ENCODE measurements at regions of chr11 and their contacts with region 1.

Region 1: DNA sequence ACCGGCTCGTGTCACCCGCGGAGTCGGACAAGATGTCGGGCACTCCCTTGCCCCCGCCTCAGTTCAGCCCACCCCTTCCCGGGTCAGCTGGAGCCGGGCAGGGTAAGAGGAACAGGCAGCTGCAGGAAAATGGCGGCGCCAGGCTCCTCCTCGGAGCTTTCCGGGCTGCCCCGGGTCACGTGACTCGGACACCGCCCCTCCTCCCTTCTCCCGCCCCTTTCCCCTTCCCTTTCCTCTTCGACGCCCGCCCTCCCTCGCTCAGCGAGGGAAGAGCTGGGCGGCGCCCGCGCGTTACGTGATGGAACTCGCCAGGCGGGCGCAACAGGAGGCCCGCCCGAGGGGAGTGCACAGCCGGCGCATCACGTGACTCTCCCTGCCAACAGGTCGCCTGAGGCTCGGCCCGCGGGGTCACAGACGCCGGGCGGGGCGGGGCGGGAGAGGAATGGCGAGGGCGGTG is at the start of gene PICALM:
- DNase-seq: peak; percentile 98 to 99 (median 99)
- ATAC-seq: peak; percentile 94 to 97 (median 96)
- H3K4me3 ChIP-seq: peak within 1 kb of the TSS; percentile 72 to 99 (median 91)
- H3K27ac ChIP-seq: peak within 1 kb of the TSS; percentile 96 to 99 (median 98)
- H3K4me1 ChIP-seq: peaks cover 0 to 39% (median 31%) of the 10 kb centered on the region in 12 donors
- H3K27me3 ChIP-seq: no peaks in the 10 kb centered on the region
- CTCF ChIP-seq: peak in 2 of 12 donors; percentile 3 to 18
- POLR2A ChIP-seq: peak in 1 of 2 donors; percentile 71
- total RNA-seq, gene PICALM: 139 to 207 (median 183) TPM

Region 2: GRCh38 chr11:86003654-86004053 is 65.3 kb before region 1 on chr11:
- intact Hi-C with region 1: no loop called
- DNase-seq: no peak
- ATAC-seq: no peak
- H3K4me3 ChIP-seq: no peak overlapping the region
- H3K27ac ChIP-seq: no peak overlapping the region
- H3K4me1 ChIP-seq: peaks cover 0 to 8% (median 0%) of the 10 kb centered on the region in 12 donors
- H3K27me3 ChIP-seq: no peaks in the 10 kb centered on the region
- CTCF ChIP-seq: no peak
- POLR2A ChIP-seq: no peak

Region 3: DNA sequence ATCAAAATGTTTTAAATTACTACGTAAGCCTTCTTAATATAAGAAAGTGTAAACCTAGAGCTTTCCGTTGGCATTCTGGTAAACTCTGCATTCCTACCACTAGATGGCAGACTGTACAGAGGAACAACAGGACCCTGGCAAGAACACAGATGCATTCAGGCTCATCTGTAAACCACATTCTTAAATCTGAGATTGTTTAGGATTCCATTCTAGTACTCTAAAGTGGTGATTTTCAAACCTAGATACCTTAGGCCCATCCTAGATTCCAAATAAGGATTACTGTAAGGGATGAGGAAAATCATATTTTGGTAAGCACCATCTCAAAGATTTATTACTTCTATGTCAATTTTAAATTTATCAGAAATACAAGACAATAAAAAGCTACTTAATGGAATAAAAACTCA is 27.0 kb before region 1 on chr11:
- intact Hi-C with region 1: loop called in 2 of 10 experiments (anchors 2 kb)
- DNase-seq: peak in 3 of 5 donors; percentile 32 to 79 (median 78)
- ATAC-seq: peak; percentile 80 to 91 (median 84)
- H3K4me3 ChIP-seq: peak overlapping the region in 8 of 12 donors; percentile 16 to 46 (median 26)
- H3K27ac ChIP-seq: peak overlapping the region in 10 of 12 donors; percentile 13 to 75 (median 58)
- H3K4me1 ChIP-seq: peaks cover 0 to 81% (median 57%) of the 10 kb centered on the region in 12 donors
- H3K27me3 ChIP-seq: no peaks in the 10 kb centered on the region
- CTCF ChIP-seq: peak; percentile 82 to 94 (median 89)
- POLR2A ChIP-seq: no peak

Region 4: GRCh38 chr11:86151174-86152005 is 82.4 kb after region 1 on chr11:
- intact Hi-C with region 1: loop called in 1 of 10 experiments (anchors 5 kb)
- DNase-seq: peak; percentile 38 to 72 (median 39)
- ATAC-seq: peak; percentile 47 to 73 (median 67)
- H3K4me3 ChIP-seq: no peak overlapping the region
- H3K27ac ChIP-seq: peak overlapping the region in 11 of 12 donors; percentile 0 to 70 (median 44)
- H3K4me1 ChIP-seq: peaks cover 0 to 37% (median 23%) of the 10 kb centered on the region in 12 donors
- H3K27me3 ChIP-seq: no peaks in the 10 kb centered on the region
- CTCF ChIP-seq: no peak
- POLR2A ChIP-seq: no peak

Region 5: GRCh38 chr11:86174101-86175046 is 105.4 kb after region 1 on chr11:
- intact Hi-C with region 1: loop called in 8 of 10 experiments (anchors 1 to 5 kb)
- DNase-seq: peak; percentile 81 to 95 (median 86)
- ATAC-seq: peak; percentile 91 to 96 (median 95)
- H3K4me3 ChIP-seq: no peak overlapping the region
- H3K27ac ChIP-seq: peak overlapping the region; percentile 23 to 89 (median 76)
- H3K4me1 ChIP-seq: peaks cover 6 to 78% (median 45%) of the 10 kb centered on the region in 12 donors
- H3K27me3 ChIP-seq: no peaks in the 10 kb centered on the region
- CTCF ChIP-seq: no peak
- POLR2A ChIP-seq: peak in 1 of 2 donors; percentile 31

Region 6: DNA sequence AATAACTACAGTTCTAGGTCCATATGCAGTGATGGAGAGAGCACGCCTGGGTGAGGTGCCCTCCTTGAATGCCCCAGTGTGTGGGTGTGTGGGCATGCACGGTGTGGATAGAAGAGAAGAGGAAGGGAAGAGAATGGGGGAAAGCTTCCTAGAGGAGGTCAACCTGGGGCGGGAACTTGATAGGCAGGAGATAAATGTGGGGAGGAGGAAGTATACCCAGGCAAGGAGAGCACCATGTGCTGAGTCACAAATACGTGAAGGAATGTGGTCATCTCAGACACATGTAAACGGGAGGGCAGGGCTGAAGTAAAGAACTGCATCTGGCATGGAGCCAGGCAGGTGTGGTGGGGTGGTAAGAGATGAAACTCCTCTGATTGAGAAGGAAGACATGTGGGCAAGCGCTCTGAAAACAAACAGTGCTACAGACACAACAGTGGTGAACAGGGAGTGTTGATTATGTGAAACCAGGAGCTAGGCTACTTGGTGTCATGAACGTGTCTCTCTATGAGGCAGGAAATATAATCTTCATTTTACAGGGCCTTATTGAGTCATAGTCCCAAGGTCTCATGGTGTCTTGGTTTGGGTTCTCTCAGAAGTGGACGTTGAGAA is 114.1 kb after region 1 on chr11:
- intact Hi-C with region 1: loop called in 2 of 10 experiments (anchors 5 to 10 kb)
- DNase-seq: no peak
- ATAC-seq: no peak
- H3K4me3 ChIP-seq: no peak overlapping the region
- H3K27ac ChIP-seq: no peak overlapping the region
- H3K4me1 ChIP-seq: peaks cover 0 to 65% (median 35%) of the 10 kb centered on the region in 12 donors
- H3K27me3 ChIP-seq: no peaks in the 10 kb centered on the region
- CTCF ChIP-seq: no peak
- POLR2A ChIP-seq: no peak

Region 7: GRCh38 chr11:86193297-86194095 is 124.5 kb after region 1 on chr11:
- intact Hi-C with region 1: loop called in 7 of 10 experiments (anchors 1 to 10 kb)
- DNase-seq: peak; percentile 72 to 88 (median 84)
- ATAC-seq: peak; percentile 97 to 99 (median 99)
- H3K4me3 ChIP-seq: peak overlapping the region in 9 of 12 donors; percentile 24 to 45 (median 38)
- H3K27ac ChIP-seq: peak overlapping the region; percentile 11 to 88 (median 68)
- H3K4me1 ChIP-seq: peaks cover 0 to 65% (median 14%) of the 10 kb centered on the region in 12 donors
- H3K27me3 ChIP-seq: no peaks in the 10 kb centered on the region
- CTCF ChIP-seq: peak; percentile 60 to 89 (median 79)
- POLR2A ChIP-seq: no peak

Measured in heart left ventricle (tissue), 16 donors.